ENCODE measurements at regions of chr15 and their contacts with region 1.

Region 1: GRCh38 chr15:52622791-52623190 is 54.0 kb upstream of the ARPP19 start:
- DNase-seq: no peak
- H3K4me3 ChIP-seq: no peak overlapping the region
- H3K27ac ChIP-seq: no peak overlapping the region
- H3K4me1 ChIP-seq: no peaks in the 10 kb centered on the region
- H3K27me3 ChIP-seq: no peaks in the 10 kb centered on the region
- CTCF ChIP-seq: no peak
- POLR2A ChIP-seq: no peak

Region 2: GRCh38 chr15:52546031-52546751 is 76.6 kb before region 1 on chr15:
- CTCF ChIA-PET with region 1: no interaction called
- POLR2A ChIA-PET with region 1: no interaction called
- dilution Hi-C with region 1: no loop called
- intact Hi-C with region 1: no loop called
- DNase-seq: no peak
- H3K4me3 ChIP-seq: no peak overlapping the region
- H3K27ac ChIP-seq: no peak overlapping the region
- H3K4me1 ChIP-seq: no peaks in the 10 kb centered on the region
- H3K27me3 ChIP-seq: no peaks in the 10 kb centered on the region
- CTCF ChIP-seq: no peak
- POLR2A ChIP-seq: no peak

Region 3: DNA sequence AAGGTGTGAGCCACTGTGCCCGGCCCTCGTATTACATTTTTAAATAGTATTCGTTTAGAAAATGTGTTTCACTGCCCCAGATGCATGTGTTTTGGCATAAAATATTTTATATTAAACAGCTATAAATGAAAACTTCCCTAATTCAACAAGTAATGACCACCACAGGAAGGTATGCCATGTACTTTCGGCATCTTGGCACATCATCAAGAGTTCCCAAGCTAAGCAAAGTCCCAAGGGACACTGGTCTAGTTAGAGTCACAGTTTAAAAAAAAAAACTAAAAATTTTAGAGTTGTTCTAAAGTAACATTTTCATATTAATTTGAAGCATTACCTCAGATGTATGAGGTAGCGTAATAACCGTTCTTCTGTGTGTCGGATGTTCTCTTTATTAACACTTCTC is 38.4 kb before region 1 on chr15:
- CTCF ChIA-PET with region 1: no interaction called
- POLR2A ChIA-PET with region 1: no interaction called
- dilution Hi-C with region 1: no loop called
- intact Hi-C with region 1: loop called (anchors 2 kb)
- DNase-seq: no peak
- H3K4me3 ChIP-seq: no peak overlapping the region
- H3K27ac ChIP-seq: no peak overlapping the region
- H3K4me1 ChIP-seq: no peaks in the 10 kb centered on the region
- H3K27me3 ChIP-seq: no peaks in the 10 kb centered on the region
- CTCF ChIP-seq: no peak
- POLR2A ChIP-seq: no peak